Activated CD8-positive, alpha-beta T cell treated with anti-CD3 and anti-CD28 coated beads, Interleukin-2, amount 10 ng/mL, durations not matched to agents 7 days and 5 days (primary cell): ENCODE measurements at regions of chr7 and their contacts with region 1.

Region 1: DNA sequence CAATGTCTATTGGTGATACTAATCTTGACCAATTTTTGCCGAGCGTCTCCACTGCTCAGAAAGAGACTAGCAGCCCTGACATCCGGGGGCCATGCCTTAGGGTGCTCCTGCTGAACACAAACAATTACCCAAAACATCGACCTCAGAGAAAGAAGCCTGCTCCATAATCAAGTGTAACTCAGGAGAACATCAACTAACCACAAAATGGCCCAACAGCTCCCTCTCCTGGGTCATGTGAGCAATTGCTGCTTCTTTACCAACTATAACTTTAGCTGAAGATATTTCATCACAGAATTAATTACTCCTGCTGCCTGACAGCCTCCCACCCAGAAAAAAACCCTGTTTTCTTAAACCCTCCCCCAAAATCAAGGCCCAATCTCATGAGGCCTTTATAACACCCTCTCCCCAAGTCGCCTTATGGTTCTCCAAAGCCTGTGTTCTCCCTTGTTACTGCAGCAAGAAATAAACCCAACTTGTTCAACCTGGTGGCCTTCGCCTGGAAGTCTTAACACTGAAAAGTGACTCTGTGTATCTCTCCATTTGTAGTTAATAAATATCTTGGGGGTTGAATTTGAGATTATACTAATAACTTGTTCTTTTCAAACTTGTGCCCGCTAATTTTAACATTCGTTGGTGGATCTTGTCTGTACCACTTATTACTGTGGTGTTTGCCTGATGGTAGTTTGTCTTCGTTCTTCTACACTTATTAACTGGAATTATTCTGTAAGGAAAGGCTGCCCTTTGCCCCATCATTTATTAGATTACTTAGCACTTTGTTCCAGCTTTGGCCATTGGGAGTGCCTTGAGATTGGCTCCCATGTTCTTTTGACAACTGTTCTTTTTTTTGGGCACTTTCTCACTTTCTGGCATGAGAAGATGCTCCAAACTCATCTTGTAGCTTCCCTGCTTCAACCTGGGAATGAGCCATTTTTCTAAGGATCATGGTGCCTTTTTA is 21.2 kb upstream of the RAMP3 start:
- DNase-seq: peak; percentile 85
- ATAC-seq: peak; percentile 82
- H3K4me3 Mint-ChIP-seq: no peak overlapping the region
- H3K27ac Mint-ChIP-seq: peak overlapping the region; percentile 27
- H3K4me1 Mint-ChIP-seq: peaks cover 19% of the 10 kb centered on the region
- H3K27me3 Mint-ChIP-seq: peaks cover 9% of the 10 kb centered on the region

Region 2: DNA sequence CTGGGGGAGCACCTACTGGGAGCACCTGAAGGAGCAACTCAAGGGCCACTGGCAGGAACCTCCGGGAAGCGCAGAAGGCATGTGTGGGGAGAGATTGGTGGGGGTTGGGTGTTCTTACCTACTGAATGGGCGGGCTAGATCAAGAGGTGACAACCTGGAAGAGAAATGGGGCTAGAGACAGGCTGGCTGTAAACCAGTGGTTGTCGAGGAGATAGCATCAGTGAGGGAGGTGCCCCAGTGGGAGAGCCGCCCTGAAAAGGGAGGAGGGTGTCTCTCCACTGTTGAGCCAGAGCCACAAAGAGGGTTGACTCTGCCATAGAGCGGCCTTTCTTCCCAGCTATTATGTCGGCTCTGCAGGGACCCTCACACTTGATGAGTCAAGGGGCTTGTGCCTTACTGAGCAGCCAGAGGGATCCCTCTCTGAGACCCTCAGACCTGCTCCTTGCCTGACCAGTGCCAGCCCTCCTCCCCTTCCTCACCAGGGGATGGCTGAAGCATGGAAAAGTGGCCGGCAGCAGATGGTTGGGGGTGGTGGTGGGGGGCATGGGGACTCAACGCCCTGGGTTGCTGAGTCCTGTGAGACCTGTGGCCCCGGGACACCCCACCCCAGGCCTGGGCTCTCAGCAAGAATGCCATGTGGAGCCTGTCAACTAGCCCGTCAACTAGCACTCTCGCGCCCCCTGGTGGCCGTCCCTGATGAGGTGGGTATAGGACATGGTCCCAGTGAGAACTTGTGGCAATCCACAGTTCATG is 214.6 kb before region 1 on chr7:
- CTCF ChIA-PET with region 1: interaction called, 10 read pairs
- POLR2A ChIA-PET with region 1: no interaction called
- DNase-seq: peak; percentile 97
- ATAC-seq: peak; percentile 98
- H3K4me3 Mint-ChIP-seq: no peak overlapping the region
- H3K27ac Mint-ChIP-seq: peak overlapping the region; percentile 39
- H3K4me1 Mint-ChIP-seq: peaks cover 25% of the 10 kb centered on the region
- H3K27me3 Mint-ChIP-seq: peaks cover 7% of the 10 kb centered on the region

Region 3: DNA sequence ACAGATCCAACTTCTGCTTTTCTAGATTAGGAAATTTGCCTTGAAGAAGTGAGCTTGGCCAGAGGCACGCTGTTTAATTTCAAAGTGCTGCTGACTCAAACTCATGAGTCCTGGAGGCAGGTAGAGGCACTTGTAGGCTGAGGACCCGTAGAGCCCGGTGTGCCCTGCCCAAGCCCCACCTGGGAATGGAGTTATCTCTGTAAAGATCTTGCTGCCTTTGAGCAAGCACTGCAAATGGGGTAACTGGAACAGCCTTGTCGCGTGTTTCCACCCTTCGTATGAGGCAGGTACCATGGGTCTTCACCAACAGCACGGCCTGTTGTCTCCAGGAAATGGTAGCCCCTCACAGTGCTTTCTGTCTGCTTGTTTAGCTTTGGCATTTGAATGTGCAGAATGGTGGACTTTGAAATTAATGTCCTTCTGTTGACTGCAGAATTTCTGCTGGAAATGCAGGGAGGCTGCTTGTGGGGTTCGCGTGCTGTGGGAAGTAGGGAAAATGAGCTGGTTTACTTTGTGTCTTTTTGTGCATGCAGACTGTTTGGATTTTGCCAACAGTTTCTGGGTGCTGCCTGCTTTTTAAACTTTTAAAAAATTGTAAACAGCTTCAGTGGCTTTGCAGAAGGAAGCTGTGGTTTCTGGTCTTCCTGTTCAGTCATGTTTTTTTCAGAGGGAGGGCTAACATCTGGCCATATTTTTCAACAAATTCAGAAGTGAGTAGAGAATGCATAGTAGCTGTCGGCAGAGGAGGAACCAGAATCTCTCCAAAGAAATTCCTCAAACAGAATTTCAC is 109.2 kb before region 1 on chr7:
- CTCF ChIA-PET with region 1: interaction called, 12 read pairs
- POLR2A ChIA-PET with region 1: interaction called, 7 read pairs
- DNase-seq: peak; percentile 56
- ATAC-seq: peak; percentile 57
- H3K4me3 Mint-ChIP-seq: peak overlapping the region; percentile 80
- H3K27ac Mint-ChIP-seq: peak overlapping the region; percentile 84
- H3K4me1 Mint-ChIP-seq: peaks cover 67% of the 10 kb centered on the region
- H3K27me3 Mint-ChIP-seq: no peaks in the 10 kb centered on the region

Region 4: DNA sequence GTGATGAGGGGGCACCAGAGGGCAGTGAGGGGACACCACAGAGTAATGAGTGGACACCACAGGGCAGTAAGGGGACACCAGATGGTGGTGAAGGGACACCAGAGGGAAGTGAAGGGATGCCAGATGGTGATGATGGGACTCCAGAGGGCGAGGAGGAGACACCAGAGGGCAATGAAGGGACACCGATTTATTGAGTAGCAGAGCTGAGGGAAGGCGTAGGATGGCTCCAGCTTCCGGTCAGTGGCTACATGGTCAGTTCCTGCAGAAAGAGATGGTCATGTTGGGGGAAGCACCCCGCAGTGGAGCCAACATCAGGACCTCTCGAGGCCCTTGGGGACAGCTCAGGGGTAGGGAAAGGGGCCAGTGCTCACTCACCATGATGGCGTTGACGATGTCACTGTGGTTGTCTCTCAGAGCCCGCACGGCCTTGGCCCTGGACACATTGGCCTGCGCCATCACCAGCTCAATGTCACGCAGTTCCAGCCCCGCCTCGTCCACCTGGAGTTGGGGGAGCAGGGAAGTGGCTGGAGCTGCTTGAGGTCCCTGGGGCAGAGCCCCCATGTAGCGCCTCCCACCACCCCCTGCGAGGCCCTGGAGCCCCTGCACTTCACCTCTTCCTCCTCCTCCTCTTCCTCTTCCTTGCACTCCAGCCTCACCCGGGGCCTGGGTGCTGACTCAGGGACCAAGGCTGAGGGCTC is 56.0 kb before region 1 on chr7:
- CTCF ChIA-PET with region 1: interaction called, 16 read pairs
- POLR2A ChIA-PET with region 1: no interaction called
- DNase-seq: peak; percentile 37
- ATAC-seq: peak; percentile 35
- H3K4me3 Mint-ChIP-seq: no peak overlapping the region
- H3K27ac Mint-ChIP-seq: peak overlapping the region; percentile 57
- H3K4me1 Mint-ChIP-seq: peaks cover 6% of the 10 kb centered on the region
- H3K27me3 Mint-ChIP-seq: no peaks in the 10 kb centered on the region

Region 5: DNA sequence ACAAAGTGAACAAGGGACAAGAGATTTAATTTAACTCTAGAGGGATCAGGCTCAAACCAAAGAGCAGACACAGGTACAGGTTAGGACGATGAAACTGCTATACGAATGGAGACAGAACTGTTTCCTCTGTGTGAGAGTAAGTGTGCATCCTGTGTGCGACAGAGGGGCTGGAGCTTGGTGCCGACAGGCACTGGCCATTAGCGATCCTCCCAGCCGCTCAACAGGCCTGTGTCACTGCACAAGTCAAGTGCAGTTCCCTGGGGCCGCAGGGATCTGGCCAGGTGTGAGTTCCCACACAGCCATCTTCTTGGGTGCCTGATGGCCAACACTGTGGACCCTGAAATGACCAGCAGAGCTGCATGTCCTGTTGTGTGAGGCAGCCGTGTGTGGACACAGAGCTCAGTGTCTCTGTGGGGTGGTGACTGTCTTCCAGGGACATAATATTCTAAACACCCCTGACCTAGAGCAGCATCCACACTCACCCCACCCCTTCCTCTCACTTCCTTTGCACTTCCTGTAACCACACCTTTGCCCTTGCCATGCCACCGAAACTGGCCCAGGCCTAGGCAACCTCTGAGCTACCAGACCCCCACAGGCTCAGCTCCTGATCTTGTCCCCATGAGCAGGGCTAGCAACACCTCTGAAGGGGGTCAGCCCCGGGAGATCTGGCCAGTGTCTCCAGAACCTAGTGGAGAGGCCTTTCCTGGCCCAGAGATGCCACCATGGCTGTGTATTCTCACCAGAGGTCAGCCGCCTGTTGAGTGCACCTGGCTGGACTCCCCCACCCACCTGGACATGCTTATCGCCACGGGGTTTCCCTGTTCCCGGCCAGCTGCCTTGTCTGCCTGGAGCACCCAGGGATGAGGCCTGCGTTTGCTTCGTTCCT is 13.2 kb before region 1 on chr7:
- CTCF ChIA-PET with region 1: interaction called, 38 read pairs
- POLR2A ChIA-PET with region 1: interaction called, 4 read pairs
- DNase-seq: peak; percentile 37
- ATAC-seq: peak; percentile 59
- H3K4me3 Mint-ChIP-seq: peak overlapping the region; percentile 54
- H3K27ac Mint-ChIP-seq: peak overlapping the region; percentile 97
- H3K4me1 Mint-ChIP-seq: peaks cover 22% of the 10 kb centered on the region
- H3K27me3 Mint-ChIP-seq: no peaks in the 10 kb centered on the region

Region 6: DNA sequence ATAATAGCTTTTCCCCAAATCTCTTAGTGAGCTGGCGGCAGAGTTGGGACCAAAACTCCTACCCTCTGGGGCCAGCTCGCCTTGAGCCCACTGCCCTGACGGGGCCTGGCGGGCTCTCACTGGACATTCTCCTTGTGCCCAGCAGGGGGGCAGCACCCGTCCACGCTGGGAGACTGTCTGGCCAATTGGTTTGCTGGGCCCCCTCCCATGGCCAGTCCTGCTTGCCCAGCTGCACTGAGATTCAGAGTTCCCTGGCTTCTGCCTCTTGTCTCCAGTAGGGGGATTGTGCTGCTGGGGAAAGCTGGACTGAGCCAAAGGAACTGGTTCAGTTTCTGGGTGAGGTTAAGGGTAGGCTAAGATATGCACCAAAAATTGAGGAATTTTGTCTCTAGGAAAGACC is 81.0 kb after region 1 on chr7:
- CTCF ChIA-PET with region 1: no interaction called
- POLR2A ChIA-PET with region 1: no interaction called
- DNase-seq: no peak
- ATAC-seq: no peak
- H3K4me3 Mint-ChIP-seq: no peak overlapping the region
- H3K27ac Mint-ChIP-seq: no peak overlapping the region
- H3K4me1 Mint-ChIP-seq: no peaks in the 10 kb centered on the region
- H3K27me3 Mint-ChIP-seq: peaks cover 33% of the 10 kb centered on the region